ENCODE measurements at regions of chr16 and their contacts with region 1.

Region 1: GRCh38 chr16:68396481-68396880 is 51.8 kb downstream of the SMPD3 start:
- DNase-seq: peak; percentile 69
- H3K4me3 Mint-ChIP-seq: no peak overlapping the region
- H3K27ac Mint-ChIP-seq: peak overlapping the region; percentile 22
- H3K4me1 Mint-ChIP-seq: peaks cover 28% of the 10 kb centered on the region
- H3K27me3 Mint-ChIP-seq: peaks cover 60% of the 10 kb centered on the region

Region 2: GRCh38 chr16:68382296-68382718 is 14.2 kb before region 1 on chr16:
- CTCF ChIA-PET with region 1: interaction called, 12 read pairs
- DNase-seq: peak; percentile 41
- H3K4me3 Mint-ChIP-seq: no peak overlapping the region
- H3K27ac Mint-ChIP-seq: no peak overlapping the region
- H3K4me1 Mint-ChIP-seq: peaks cover 18% of the 10 kb centered on the region
- H3K27me3 Mint-ChIP-seq: peaks cover 91% of the 10 kb centered on the region

Region 3: GRCh38 chr16:68406451-68407152 is 10.1 kb after region 1 on chr16:
- CTCF ChIA-PET with region 1: interaction called, 14 read pairs
- DNase-seq: no peak
- H3K4me3 Mint-ChIP-seq: no peak overlapping the region
- H3K27ac Mint-ChIP-seq: no peak overlapping the region
- H3K4me1 Mint-ChIP-seq: peaks cover 4% of the 10 kb centered on the region
- H3K27me3 Mint-ChIP-seq: peaks cover 66% of the 10 kb centered on the region

Region 4: DNA sequence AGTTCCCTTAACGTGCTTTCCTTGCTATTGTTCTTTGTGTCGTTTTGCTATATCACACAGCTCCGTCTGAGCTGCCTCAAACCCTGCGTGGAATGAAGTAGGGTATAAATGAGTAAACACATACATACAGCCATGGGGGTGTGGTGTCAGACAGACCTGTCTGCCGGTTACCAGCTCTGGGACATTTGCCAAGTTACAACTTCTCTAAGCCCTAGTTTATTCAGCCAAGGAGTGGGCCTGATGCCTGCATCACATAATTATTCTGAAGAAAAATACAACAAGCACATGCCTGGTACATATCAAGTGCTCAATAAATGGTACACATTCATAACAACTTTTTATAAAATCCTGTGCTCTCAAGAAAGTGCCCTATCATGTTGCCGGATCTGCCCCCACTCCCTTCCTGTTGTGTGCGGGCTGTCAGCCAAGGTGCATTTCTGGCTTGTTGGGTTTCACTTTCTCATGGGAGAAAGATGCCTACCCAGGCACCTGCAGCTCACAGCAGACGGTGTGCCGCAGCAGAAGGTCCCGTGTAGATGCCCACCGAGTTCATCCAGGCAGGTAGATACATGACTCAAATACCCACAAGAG is 21.3 kb after region 1 on chr16:
- CTCF ChIA-PET with region 1: interaction called, 24 read pairs
- DNase-seq: peak; percentile 90
- H3K4me3 Mint-ChIP-seq: peak overlapping the region; percentile 75
- H3K27ac Mint-ChIP-seq: peak overlapping the region; percentile 99
- H3K4me1 Mint-ChIP-seq: peaks cover 47% of the 10 kb centered on the region
- H3K27me3 Mint-ChIP-seq: peaks cover 3% of the 10 kb centered on the region

Region 5: DNA sequence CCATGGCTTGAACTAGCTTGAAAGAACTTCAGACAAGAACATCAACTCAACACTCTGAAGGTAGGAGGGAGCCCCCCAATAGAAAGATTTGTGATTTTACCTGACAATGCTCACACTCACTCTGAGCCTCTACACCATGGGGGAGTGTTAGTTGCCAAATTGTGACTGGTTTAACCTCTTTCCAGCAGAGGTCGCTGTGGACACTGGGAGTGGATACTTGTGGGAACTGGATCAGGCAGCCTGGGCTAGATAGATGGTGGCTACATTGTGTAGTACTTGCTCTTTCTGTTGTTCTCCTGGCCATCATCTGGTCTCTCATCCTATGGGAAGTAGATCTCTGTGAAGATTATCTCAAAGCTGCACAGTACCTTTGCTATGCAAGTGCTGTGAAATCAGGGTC is 49.0 kb after region 1 on chr16:
- CTCF ChIA-PET with region 1: interaction called, 10 read pairs
- DNase-seq: peak; percentile 77
- H3K4me3 Mint-ChIP-seq: no peak overlapping the region
- H3K27ac Mint-ChIP-seq: no peak overlapping the region
- H3K4me1 Mint-ChIP-seq: peaks cover 18% of the 10 kb centered on the region
- H3K27me3 Mint-ChIP-seq: peaks cover 71% of the 10 kb centered on the region

Region 6: DNA sequence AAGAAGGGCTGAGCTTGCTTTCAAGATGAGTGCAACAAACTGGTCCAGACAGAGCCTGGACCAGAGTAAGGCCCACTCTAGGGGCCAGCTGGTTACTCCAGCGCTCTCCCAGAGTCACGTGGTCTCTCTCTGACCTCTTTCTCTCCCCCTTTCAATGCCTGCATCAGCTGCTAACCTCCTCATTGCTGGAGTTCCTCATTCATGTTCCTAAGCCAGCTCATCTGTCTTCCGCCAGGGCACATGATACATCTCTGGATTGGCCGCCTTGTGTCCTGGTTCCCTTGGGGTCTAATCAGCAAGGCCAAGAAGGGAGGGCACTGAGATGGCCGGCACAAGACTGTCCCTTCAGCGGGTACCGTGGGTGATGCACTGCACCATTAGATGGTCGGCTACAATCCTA is 115.7 kb after region 1 on chr16:
- CTCF ChIA-PET with region 1: interaction called, 48 read pairs
- DNase-seq: no peak
- H3K4me3 Mint-ChIP-seq: no peak overlapping the region
- H3K27ac Mint-ChIP-seq: no peak overlapping the region
- H3K4me1 Mint-ChIP-seq: peaks cover 6% of the 10 kb centered on the region
- H3K27me3 Mint-ChIP-seq: peaks cover 40% of the 10 kb centered on the region

Region 7: DNA sequence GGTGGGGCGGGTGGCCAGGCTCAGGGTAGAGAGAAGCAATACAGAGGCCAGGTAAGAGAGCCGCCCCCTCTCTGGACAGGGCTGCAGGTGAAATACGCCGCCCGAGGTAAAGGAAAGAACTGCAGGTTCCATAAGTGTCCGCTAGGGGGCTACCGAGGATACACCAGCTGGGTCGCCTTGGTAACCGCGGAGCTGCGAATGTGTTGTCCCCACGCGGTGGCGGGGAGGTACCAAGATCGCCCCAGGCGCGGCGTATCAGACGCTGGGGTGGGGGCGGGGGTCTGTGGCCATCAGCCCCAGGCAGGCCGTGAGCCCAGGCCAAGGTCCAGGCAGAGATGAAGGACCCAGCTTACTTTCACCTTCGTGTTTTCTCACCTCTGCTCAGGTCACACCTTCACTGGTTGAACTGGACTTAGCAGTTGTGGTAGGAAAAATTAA is 124.2 kb after region 1 on chr16:
- CTCF ChIA-PET with region 1: interaction called, 21 read pairs
- DNase-seq: peak; percentile 93
- H3K4me3 Mint-ChIP-seq: peak overlapping the region; percentile 23
- H3K27ac Mint-ChIP-seq: no peak overlapping the region
- H3K4me1 Mint-ChIP-seq: peaks cover 8% of the 10 kb centered on the region
- H3K27me3 Mint-ChIP-seq: peaks cover 42% of the 10 kb centered on the region

Region 8: GRCh38 chr16:69179328-69180010 is 783.0 kb after region 1 on chr16:
- CTCF ChIA-PET with region 1: no interaction called
- DNase-seq: no peak
- H3K4me3 Mint-ChIP-seq: no peak overlapping the region
- H3K27ac Mint-ChIP-seq: no peak overlapping the region
- H3K4me1 Mint-ChIP-seq: peaks cover 3% of the 10 kb centered on the region
- H3K27me3 Mint-ChIP-seq: no peaks in the 10 kb centered on the region

Measured in activated naive CD4-positive, alpha-beta T cell treated with anti-CD3 and anti-CD28 coated beads, Interleukin-2, amount 10 ng/mL, durations not matched to agents 7 days and 5 days (primary cell).